ENCODE measurements at regions of chr7 and their contacts with region 1.

Region 1: GRCh38 chr7:27739909-27740448 is at the start of gene TAX1BP1:
- DNase-seq: peak; percentile 72
- ATAC-seq: peak; percentile 96
- H3K4me3 ChIP-seq: peak within 1 kb of the TSS; percentile 97 to 99
- H3K27ac ChIP-seq: peak within 1 kb of the TSS; percentile 96
- H3K4me1 ChIP-seq: peaks cover 30% of the 10 kb centered on the region
- H3K27me3 ChIP-seq: no peaks in the 10 kb centered on the region
- CTCF ChIP-seq: no peak
- total RNA-seq, gene TAX1BP1: 125 TPM

Region 2: DNA sequence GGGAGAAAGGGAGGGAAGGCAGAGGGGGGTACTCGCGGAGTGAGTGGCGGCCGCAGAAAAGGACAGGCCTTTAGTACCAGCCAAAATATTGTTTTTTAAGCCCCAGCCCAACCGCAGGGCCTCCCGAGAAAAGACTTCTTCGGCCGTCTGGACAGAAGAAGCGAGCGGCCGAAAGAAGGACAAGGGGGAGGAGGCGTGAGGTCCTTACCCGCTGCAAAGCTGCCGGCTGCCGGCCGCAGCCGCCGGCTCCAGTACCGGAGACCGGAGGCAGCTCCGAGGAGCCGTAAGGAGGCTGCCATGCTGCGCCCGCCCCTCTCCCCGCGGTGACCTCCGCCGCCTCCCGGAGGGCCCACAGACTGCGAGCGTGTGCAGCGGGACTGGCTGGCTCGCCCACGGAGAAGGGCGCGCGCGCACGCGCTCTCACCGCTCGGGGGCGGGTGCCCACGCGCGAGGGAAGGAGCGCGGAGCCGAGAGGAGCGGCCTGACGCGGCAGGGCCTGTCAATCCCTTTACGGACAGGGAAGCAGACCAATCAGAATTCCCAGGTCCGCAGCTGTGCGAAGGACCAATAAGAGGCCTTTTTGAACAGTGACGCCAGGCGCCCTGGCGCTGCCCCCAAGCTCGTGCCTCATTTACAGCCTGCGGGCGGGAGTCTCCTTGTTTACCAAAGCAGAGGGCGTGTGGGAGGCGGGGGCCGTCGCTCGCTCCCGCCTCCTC is 77.3 kb before region 1 on chr7 and contains the start of gene HIBADH:
- CTCF ChIA-PET with region 1: no interaction called
- POLR2A ChIA-PET with region 1: no interaction called
- in situ Hi-C with region 1: no loop called
- intact Hi-C with region 1: loop called (anchors 5 kb)
- DNase-seq: peak; percentile 96
- ATAC-seq: peak; percentile 99
- H3K4me3 ChIP-seq: peak within 1 kb of the TSS; percentile 77 to 95
- H3K27ac ChIP-seq: peak within 1 kb of the TSS; percentile 91
- H3K4me1 ChIP-seq: peaks cover 4% of the 10 kb centered on the region; the same call in 1 of the 2 replicates
- H3K27me3 ChIP-seq: no peaks in the 10 kb centered on the region
- CTCF ChIP-seq: no peak
- total RNA-seq, gene HIBADH: 31.2 TPM

Region 3: DNA sequence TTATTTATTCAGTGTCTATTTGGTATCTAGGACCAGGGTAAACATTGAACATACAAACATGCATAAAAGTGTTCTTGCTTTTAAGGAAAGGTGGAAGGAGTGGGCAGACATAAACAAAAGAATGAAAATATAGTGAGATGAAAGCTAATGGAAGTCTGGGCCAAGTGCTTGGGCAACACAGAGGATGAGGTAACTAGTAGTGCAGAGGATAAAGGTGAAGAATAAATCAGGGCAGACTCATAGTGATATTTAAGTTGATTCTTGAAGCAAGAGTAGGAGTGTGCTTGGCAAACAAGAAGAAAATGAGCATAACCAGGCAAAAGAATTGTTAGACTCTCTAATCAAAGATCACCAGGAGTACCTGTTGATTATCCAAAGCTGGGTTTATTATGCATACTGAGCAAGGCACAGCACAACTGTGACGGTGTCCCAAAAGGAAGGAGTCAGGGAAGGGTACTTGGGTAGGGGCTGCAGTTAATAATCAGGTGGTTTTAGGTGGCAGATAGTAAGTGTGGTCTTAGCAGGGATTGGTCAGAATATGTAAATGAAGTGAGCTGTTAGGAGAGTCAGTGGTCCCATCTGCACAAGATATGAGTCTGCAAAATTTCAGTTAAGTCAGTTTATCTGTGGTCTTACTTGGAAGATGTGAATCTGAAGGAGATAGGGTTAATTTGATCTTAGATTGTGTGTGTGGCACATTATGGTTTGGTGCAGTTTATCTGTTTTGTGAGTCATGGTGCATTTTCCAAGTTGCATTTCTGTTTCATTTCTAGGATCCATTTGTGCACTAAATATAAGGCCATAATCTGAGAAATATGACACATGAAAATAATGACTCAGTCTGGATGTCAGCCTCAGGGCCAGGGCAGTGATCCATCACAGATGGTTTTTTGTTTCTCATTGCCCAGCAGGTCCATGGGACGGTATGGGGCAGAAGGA is 30.6 kb before region 1 on chr7:
- CTCF ChIA-PET with region 1: no interaction called
- POLR2A ChIA-PET with region 1: no interaction called
- in situ Hi-C with region 1: no loop called
- intact Hi-C with region 1: no loop called
- DNase-seq: no peak
- ATAC-seq: peak; percentile 63; the same call in 1 of the 2 replicates
- H3K4me3 ChIP-seq: no peak overlapping the region
- H3K27ac ChIP-seq: no peak overlapping the region
- H3K4me1 ChIP-seq: 0 out of 2 replicates have a peak, but pooled peaks cover 3% of the 10 kb centered on the region
- H3K27me3 ChIP-seq: no peaks in the 10 kb centered on the region
- CTCF ChIP-seq: no peak

Region 4: GRCh38 chr7:27921081-27921836 is 181.3 kb after region 1 on chr7:
- CTCF ChIA-PET with region 1: no interaction called
- POLR2A ChIA-PET with region 1: no interaction called
- in situ Hi-C with region 1: no loop called
- intact Hi-C with region 1: loop called (anchors 2 kb)
- DNase-seq: peak; percentile 61
- ATAC-seq: peak; percentile 82
- H3K4me3 ChIP-seq: peak overlapping the region in 1 of 2 experiments; percentile 22; a peak in 1 of 4 replicates
- H3K27ac ChIP-seq: peak overlapping the region; percentile 52
- H3K4me1 ChIP-seq: peaks cover 18% of the 10 kb centered on the region; the same call in 1 of the 2 replicates
- H3K27me3 ChIP-seq: no peaks in the 10 kb centered on the region
- CTCF ChIP-seq: peak; percentile 75